Caco-2 (cell line): ENCODE measurements at regions of chr11 and their contacts with region 1.

Region 1: DNA sequence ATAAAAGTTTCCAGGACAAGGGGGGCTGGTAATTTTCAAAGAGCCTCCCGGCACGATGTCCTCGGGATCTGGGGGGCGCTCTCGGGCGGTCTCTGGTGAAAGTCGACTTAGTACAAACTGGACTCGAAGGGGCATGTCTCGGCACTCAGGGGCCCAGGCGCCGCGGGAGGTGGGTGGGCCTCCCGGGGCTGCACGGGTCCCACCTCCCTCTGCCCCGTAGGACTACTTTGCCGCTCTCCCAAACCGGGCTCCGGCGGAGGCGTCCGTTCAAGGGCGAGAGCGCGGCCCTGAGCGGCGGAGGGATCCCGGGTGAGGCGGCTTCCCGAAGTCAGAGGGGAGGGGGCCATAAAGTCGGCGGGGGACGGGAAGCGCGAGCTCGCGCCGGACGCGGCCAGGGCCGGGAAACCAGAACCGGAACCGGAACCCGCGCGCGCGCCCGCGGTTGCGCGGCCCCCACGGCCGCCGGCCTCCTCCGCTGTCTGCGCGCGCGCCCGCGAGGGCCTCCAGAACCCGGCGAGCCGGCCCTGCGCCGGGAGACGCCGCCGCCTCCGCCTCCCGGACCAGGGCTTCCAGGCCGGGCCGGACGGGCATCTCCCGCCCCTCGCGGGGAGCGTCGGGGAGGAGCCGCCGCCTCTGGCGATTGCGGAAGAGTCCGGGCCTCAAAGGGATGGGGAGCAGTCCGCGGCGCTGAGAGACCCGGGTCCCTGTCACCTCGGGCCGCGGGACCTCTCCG is at the start of gene ARHGEF12:
- DNase-seq: peak; percentile 99
- H3K4me3 ChIP-seq: peak within 1 kb of the TSS; percentile 89
- H3K4me3 Mint-ChIP-seq: peak within 1 kb of the TSS; percentile 98
- H3K27ac Mint-ChIP-seq: peak within 1 kb of the TSS; percentile 85
- H3K4me1 ChIP-seq: peaks cover 30% of the 10 kb centered on the region
- H3K4me1 Mint-ChIP-seq: peaks cover 36% of the 10 kb centered on the region
- H3K27me3 ChIP-seq: no peaks in the 10 kb centered on the region
- H3K27me3 Mint-ChIP-seq: no peaks in the 10 kb centered on the region
- CTCF ChIP-seq: peak; percentile 31 to 75
- total RNA-seq, gene ARHGEF12: 89.2 and 89.3 TPM in 2 replicates

Region 2: DNA sequence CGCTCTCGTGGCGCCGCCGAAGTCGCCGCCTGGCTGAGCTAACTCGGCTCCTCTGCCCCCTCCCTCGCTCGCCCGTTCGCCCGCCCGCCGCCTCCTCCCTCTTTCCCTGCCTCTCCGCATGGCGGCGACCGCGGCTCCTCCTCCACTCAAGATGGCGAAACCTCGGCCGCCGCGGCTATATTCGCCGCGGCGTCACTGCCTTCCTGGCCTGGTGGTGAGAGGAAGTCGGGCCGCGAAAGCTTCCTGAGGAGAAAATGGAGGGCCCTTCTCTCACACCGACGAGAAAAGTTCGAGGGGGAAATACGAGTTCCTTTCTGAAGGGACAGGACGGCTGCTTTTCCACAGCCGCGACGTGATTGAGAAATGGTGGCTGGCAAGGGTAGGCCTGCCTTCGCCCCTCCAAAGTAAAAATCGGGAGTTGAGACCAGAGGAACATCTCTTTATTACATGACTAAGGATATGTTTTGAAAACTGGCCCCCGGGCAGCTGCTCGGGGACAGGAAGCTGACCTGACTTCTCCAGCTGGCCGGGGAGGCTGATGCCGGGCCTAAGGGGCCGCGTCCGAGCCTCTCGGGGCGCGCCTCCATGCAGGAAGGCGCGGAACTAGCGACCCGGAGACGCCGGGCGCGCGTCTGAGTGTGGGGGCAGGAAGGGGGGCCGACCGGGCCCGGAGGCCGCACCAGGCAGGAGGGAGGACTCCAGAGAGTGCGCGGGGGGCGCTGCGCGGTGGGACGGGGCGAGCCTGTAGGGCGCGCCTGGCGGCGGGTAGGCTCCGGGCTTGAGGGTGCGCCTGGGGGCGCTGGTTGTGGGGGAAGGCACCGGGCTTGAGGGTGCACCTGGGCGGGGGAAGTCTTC is 1544.7 kb before region 1 on chr11 and contains the start of gene DDX6:
- CTCF ChIA-PET with region 1: no interaction called
- POLR2A ChIA-PET with region 1: interaction called, 10 read pairs
- intact Hi-C with region 1: no loop called
- DNase-seq: peak; percentile 96 to 98
- H3K4me3 ChIP-seq: peak within 1 kb of the TSS; percentile 63
- H3K4me3 Mint-ChIP-seq: peak within 1 kb of the TSS; percentile 93
- H3K27ac Mint-ChIP-seq: peak within 1 kb of the TSS; percentile 90
- H3K4me1 ChIP-seq: peaks cover 23% of the 10 kb centered on the region
- H3K4me1 Mint-ChIP-seq: peaks cover 23% of the 10 kb centered on the region
- H3K27me3 ChIP-seq: no peaks in the 10 kb centered on the region
- H3K27me3 Mint-ChIP-seq: no peaks in the 10 kb centered on the region
- CTCF ChIP-seq: peak in 1 of 2 experiments; percentile 76
- total RNA-seq, gene DDX6: 131 and 135 TPM in 2 replicates

Region 3: GRCh38 chr11:120392793-120393192 is 56.7 kb after region 1 on chr11:
- CTCF ChIA-PET with region 1: interaction called, 5 read pairs
- POLR2A ChIA-PET with region 1: no interaction called
- intact Hi-C with region 1: loop called (anchors 2 kb)
- DNase-seq: no peak
- H3K4me3 ChIP-seq: no peak overlapping the region
- H3K4me3 Mint-ChIP-seq: no peak overlapping the region
- H3K27ac Mint-ChIP-seq: peak overlapping the region; percentile 26
- H3K4me1 ChIP-seq: peaks cover 38% of the 10 kb centered on the region
- H3K4me1 Mint-ChIP-seq: peaks cover 57% of the 10 kb centered on the region
- H3K27me3 ChIP-seq: no peaks in the 10 kb centered on the region
- H3K27me3 Mint-ChIP-seq: no peaks in the 10 kb centered on the region
- CTCF ChIP-seq: no peak

Region 4: GRCh38 chr11:120424185-120424969 is 88.3 kb after region 1 on chr11:
- CTCF ChIA-PET with region 1: no interaction called
- POLR2A ChIA-PET with region 1: no interaction called
- intact Hi-C with region 1: loop called (anchors 5 kb)
- DNase-seq: no peak
- H3K4me3 ChIP-seq: no peak overlapping the region
- H3K4me3 Mint-ChIP-seq: no peak overlapping the region
- H3K27ac Mint-ChIP-seq: no peak overlapping the region
- H3K4me1 ChIP-seq: peaks cover 9% of the 10 kb centered on the region; the same call in 1 of the 2 replicates
- H3K4me1 Mint-ChIP-seq: no peaks in the 10 kb centered on the region
- H3K27me3 ChIP-seq: no peaks in the 10 kb centered on the region
- H3K27me3 Mint-ChIP-seq: no peaks in the 10 kb centered on the region
- CTCF ChIP-seq: no peak

Region 5: DNA sequence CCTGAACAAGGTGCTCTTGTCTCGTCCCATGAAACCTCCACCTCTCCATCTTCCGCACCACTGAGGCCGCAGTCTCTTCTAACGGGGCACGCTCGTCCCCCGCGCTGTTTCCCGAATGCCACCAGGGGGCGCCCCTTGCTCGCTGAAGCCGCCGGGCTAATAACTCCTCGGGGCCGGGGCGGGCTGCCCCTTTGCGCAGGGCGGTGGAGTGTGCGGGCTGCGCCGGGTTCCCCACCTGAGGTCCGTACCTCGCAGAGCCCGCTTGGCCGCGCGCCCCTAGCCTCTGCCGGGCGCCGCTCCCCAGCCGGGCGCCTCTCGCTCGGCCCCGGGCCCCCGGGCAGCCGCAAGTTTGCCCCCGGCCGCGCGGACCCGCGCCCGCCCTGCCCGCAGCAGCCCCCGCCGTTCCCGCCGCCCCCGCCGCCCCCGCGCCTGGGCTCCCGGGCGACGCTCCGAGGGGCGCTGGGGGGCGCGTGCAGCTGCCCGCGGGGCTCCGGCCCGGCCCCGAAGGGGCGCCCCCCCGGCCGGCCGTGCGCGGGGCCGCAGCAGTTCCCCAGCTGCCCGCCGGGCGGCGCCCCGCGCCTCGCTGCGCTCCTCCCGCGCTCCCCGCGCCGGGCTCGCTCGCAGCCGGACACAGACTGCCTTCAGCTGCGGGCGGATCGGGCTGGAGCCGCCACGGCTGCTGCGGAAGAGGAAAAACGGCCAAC is 175.2 kb after region 1 on chr11 and contains the start of gene GRIK4:
- CTCF ChIA-PET with region 1: no interaction called
- POLR2A ChIA-PET with region 1: no interaction called
- intact Hi-C with region 1: loop called (anchors 2 kb)
- DNase-seq: peak; percentile 88 to 95
- H3K4me3 ChIP-seq: peak within 1 kb of the TSS; percentile 55
- H3K4me3 Mint-ChIP-seq: peak within 1 kb of the TSS; percentile 53
- H3K27ac Mint-ChIP-seq: no peak within 1 kb of the TSS
- H3K4me1 ChIP-seq: no peaks in the 10 kb centered on the region
- H3K4me1 Mint-ChIP-seq: peaks cover 5% of the 10 kb centered on the region
- H3K27me3 ChIP-seq: peaks cover 2% of the 10 kb centered on the region; the same call in 1 of the 2 replicates
- H3K27me3 Mint-ChIP-seq: peaks cover 25% of the 10 kb centered on the region
- CTCF ChIP-seq: peak; percentile 98 to 99
- total RNA-seq, gene GRIK4: 2.0 and 3.6 TPM in 2 replicates

Region 6: DNA sequence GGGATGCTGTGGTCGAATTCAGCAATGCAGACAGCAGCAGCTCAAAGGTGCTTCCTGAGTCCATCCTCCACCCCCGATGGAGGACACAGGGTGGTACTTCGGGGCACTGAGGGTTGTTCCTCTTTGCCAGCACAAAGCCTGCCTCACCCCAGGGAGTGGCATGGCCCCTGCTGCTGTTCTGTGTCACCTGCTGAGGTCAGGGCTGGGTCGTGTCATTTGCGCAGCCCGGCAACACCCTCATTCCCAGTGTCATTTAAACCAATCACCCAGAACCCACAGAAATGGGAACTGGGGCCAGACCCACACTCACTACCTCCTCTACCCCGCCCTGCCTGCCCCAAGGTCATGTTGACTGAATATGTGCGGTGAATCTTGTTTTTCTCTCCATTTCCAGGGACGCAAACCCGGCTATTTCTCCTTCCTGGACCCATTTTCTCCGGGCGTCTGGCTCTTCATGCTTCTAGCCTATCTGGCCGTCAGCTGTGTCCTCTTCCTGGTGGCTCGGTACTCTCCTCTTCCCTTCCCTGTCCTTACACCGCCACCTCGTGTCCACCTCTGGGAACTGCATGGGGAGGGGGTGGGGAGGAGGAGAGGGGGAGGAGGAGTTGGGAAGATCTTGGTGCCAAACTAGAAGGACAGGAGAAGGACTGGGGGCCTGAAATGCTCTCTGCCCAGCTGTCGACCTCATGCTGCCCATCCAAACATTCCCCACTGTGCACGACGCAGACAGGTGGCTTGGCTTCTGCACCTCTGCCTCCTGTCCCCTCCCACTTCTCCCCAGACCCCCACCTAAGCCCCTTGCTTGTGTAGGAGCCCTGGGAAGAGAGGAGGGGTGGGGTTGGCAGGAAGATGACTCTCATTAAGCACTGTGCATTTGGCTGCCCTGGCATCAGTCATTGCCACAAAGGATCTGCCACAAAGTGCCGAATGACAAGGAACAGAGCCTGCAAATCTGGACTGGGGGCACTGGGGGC is 616.7 kb after region 1 on chr11:
- CTCF ChIA-PET with region 1: no interaction called
- POLR2A ChIA-PET with region 1: no interaction called
- intact Hi-C with region 1: loop called (anchors 5 kb)
- DNase-seq: peak; percentile 91 to 93
- H3K4me3 ChIP-seq: peak overlapping the region; percentile 13; the same call in 1 of the 2 replicates
- H3K4me3 Mint-ChIP-seq: peak overlapping the region; percentile 67
- H3K27ac Mint-ChIP-seq: no peak overlapping the region
- H3K4me1 ChIP-seq: peaks cover 5% of the 10 kb centered on the region; the same call in 1 of the 2 replicates
- H3K4me1 Mint-ChIP-seq: peaks cover 7% of the 10 kb centered on the region
- H3K27me3 ChIP-seq: peaks cover 1% of the 10 kb centered on the region; the same call in 1 of the 2 replicates
- H3K27me3 Mint-ChIP-seq: peaks cover 10% of the 10 kb centered on the region
- CTCF ChIP-seq: peak; percentile 97 to 99